ENCODE measurements at regions of chr3 and their contacts with region 1.

Region 1: DNA sequence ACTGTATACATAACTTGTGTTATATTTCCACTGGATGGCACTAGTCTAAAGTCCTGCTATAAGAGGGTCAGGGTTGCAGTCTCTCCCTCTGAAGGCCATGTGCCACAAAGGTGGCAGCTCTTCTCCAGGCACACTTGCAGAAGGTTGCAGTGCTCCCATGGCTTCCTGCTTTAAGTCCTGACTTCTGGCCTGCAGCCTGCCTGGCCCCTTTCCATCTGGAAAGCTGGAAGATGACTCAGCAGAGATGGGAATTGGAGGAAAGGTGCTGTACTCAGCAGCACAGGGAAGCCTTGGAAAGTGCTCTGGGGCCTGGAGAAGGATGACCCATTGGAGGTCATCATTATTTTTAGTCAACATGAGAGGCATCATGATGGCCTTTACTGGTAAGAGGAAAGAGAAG is 40.9 kb upstream of the MRPL3 start:
- DNase-seq: no peak
- ATAC-seq: no peak
- H3K4me3 ChIP-seq: no peak overlapping the region
- H3K27ac ChIP-seq: no peak overlapping the region
- H3K4me1 ChIP-seq: no peaks in the 10 kb centered on the region
- H3K27me3 ChIP-seq: no peaks in the 10 kb centered on the region; a peak in 1 of 4 replicates
- CTCF ChIP-seq: no peak
- EP300 ChIP-seq: no peak
- POLR2A ChIP-seq: no peak
- RAD21 ChIP-seq: no peak

Region 2: DNA sequence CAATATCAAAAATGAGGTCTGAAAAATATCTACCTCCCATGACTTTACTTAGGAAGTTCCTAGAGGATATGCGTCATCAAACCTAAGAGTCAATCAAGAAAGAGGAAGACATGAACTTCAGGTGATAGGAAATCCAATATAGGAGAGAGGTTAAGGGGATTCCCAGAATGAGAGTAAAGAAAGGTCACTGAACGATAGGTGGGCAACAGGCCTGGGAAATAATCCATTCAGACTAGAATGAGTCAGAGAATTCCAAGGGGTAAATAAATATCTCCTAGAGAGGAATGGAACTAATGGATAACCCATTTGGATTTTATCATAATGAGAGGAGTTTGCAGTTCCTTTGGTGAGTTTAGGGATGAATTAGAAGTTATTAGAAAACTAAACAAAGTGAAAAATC is 293.2 kb before region 1 on chr3:
- CTCF ChIA-PET with region 1: no interaction called
- POLR2A ChIA-PET with region 1: no interaction called
- RAD21 ChIA-PET with region 1: no interaction called
- SMC1A ChIA-PET with region 1: no interaction called
- in situ Hi-C with region 1: no loop called
- intact Hi-C with region 1: no loop called
- DNase-seq: no peak
- ATAC-seq: no peak
- H3K4me3 ChIP-seq: no peak overlapping the region
- H3K27ac ChIP-seq: no peak overlapping the region
- H3K4me1 ChIP-seq: no peaks in the 10 kb centered on the region
- H3K27me3 ChIP-seq: no peaks in the 10 kb centered on the region
- CTCF ChIP-seq: no peak
- EP300 ChIP-seq: no peak
- POLR2A ChIP-seq: no peak
- RAD21 ChIP-seq: no peak

Region 3: GRCh38 chr3:131470377-131470776 is 73.3 kb before region 1 on chr3:
- CTCF ChIA-PET with region 1: no interaction called
- POLR2A ChIA-PET with region 1: no interaction called
- RAD21 ChIA-PET with region 1: no interaction called
- SMC1A ChIA-PET with region 1: no interaction called
- in situ Hi-C with region 1: no loop called
- intact Hi-C with region 1: no loop called
- DNase-seq: no peak
- ATAC-seq: peak; percentile 21
- H3K4me3 ChIP-seq: no peak overlapping the region
- H3K27ac ChIP-seq: no peak overlapping the region
- H3K4me1 ChIP-seq: no peaks in the 10 kb centered on the region
- H3K27me3 ChIP-seq: no peaks in the 10 kb centered on the region
- CTCF ChIP-seq: no peak
- EP300 ChIP-seq: no peak
- POLR2A ChIP-seq: no peak
- RAD21 ChIP-seq: no peak

Region 4: GRCh38 chr3:132180337-132180791 is 636.6 kb after region 1 on chr3:
- CTCF ChIA-PET with region 1: interaction called, 3 read pairs
- POLR2A ChIA-PET with region 1: no interaction called
- RAD21 ChIA-PET with region 1: no interaction called
- SMC1A ChIA-PET with region 1: interaction called, 3 read pairs
- in situ Hi-C with region 1: no loop called
- intact Hi-C with region 1: loop called (anchors 10 kb)
- DNase-seq: peak; percentile 5
- ATAC-seq: peak; percentile 84
- H3K4me3 ChIP-seq: no peak overlapping the region
- H3K27ac ChIP-seq: no peak overlapping the region
- H3K4me1 ChIP-seq: no peaks in the 10 kb centered on the region
- H3K27me3 ChIP-seq: no peaks in the 10 kb centered on the region; a peak in 1 of 4 replicates
- CTCF ChIP-seq: peak; percentile 38 to 61 (median 46); a peak in 5 of 6 replicates
- EP300 ChIP-seq: no peak
- POLR2A ChIP-seq: no peak
- RAD21 ChIP-seq: peak; percentile 70

Measured in GM12878 (cell line).